ENCODE measurements at regions of chr11 and their contacts with region 1.

Region 1: GRCh38 chr11:43643898-43644620 is 36.5 kb upstream of the HSD17B12 start:
- DNase-seq: peak; percentile 78 to 96 (median 87)
- H3K4me3 ChIP-seq: peak overlapping the region; percentile 55 to 100 (median 92)
- H3K27ac ChIP-seq: peak overlapping the region in 51 of 59 donors; percentile 39 to 91 (median 77)
- H3K27me3 ChIP-seq: peaks cover 0 to 37% (median 6%) of the 10 kb centered on the region in 45 donors
- CTCF ChIP-seq: peak in 40 of 56 donors; percentile 14 to 59 (median 35)

Region 2: GRCh38 chr11:43680521-43681400 is 36.7 kb after region 1 on chr11 and contains the start of gene HSD17B12:
- intact Hi-C with region 1: loop called (anchors 1 kb)
- DNase-seq: peak; percentile 98 to 100 (median 100)
- H3K4me3 ChIP-seq: peak within 1 kb of the TSS; percentile 60 to 100 (median 92)
- H3K27ac ChIP-seq: peak within 1 kb of the TSS; percentile 27 to 97 (median 87)
- H3K27me3 ChIP-seq: no peaks in the 10 kb centered on the region
- CTCF ChIP-seq: peak in 36 of 56 donors; percentile 9 to 61 (median 28)
- total RNA-seq, gene HSD17B12: 63.4 to 147 (median 97.4) TPM

Region 3: DNA sequence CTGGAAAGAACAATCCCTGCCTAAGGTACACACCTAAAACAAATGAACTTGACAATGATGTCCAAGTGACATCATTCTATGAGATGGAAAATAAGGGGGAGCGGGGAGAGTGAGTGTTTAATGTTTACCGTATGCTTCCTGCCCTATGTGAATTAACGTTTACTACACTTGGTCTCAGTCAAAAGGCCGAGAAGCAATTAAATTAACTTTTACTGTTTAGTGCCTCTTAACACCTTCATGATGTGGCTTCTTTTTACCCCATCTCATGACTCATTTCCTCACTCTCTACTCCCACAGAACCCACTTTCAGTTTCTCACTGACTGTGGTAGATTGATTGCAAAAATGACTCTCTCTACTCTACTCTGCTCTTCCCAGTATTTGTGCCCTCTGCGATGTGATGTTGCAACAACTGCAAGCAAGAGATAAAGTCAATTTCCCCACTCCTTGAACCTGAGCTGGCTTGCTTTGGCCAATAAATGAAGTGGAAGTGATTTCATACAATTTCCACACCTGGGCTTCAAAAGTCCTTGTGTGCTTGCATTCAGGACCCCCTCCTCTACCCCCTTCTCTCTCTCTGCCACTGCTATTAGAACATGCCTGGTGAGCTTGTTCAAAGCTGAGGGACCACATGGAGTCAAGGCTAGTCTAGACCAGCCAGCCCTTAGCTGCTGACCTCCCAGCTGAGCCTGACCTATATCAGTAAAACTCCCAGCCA is 225.0 kb after region 1 on chr11:
- intact Hi-C with region 1: no loop called
- DNase-seq: no peak
- H3K4me3 ChIP-seq: no peak overlapping the region
- H3K27ac ChIP-seq: no peak overlapping the region
- H3K27me3 ChIP-seq: peaks cover 0 to 26% (median 0%) of the 10 kb centered on the region in 45 donors
- CTCF ChIP-seq: no peak

Measured in dorsolateral prefrontal cortex (tissue), 120 donors.